AG04449 (cell line): ENCODE measurements at regions of chr19 and their contacts with region 1.

Region 1: DNA sequence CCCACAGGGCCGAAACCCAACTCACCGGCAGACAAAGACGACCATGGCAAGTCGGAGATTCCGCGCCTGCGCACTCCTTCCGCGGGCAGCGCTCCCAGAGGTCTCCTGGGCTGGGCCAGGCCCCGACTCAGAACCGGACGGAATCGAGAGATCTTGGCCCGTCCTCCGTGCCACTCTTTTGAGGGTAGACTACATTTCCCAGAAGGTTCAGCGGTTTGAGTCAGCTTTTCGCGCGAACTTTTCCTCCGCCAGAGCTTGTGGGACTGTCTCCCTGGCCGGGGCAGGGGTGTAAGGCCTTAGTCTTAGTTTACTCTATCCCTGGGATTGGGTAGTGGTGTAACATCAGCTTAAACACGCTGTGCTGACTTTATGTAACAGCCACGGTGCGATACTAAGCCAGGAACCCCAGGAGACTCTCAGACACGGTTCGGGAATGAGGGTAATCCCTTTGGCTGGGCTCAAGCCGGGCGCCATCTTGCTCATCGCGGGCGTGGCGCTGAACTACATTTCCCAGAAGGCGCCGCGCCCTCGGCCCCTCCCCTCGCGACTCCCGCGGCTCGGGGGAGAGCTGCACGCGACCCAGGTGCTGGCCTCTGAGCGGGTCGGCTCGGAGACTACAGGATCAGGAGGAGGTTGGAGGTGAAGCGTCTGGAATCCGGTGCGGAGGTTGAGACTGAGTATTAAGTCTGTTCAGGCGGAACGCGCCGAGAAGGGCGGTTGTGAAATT is at the start of gene ZNF260:
- DNase-seq: peak; percentile 82
- H3K4me3 ChIP-seq: peak within 1 kb of the TSS; percentile 95
- CTCF ChIP-seq: no peak

Region 2: GRCh38 chr19:36489118-36489919 is 39.0 kb before region 1 on chr19 and contains the start of gene ZNF566:
- CTCF ChIA-PET with region 1: no interaction called
- POLR2A ChIA-PET with region 1: interaction called, 13 read pairs
- DNase-seq: peak; percentile 87
- H3K4me3 ChIP-seq: peak within 1 kb of the TSS; percentile 99
- CTCF ChIP-seq: no peak

Region 3: DNA sequence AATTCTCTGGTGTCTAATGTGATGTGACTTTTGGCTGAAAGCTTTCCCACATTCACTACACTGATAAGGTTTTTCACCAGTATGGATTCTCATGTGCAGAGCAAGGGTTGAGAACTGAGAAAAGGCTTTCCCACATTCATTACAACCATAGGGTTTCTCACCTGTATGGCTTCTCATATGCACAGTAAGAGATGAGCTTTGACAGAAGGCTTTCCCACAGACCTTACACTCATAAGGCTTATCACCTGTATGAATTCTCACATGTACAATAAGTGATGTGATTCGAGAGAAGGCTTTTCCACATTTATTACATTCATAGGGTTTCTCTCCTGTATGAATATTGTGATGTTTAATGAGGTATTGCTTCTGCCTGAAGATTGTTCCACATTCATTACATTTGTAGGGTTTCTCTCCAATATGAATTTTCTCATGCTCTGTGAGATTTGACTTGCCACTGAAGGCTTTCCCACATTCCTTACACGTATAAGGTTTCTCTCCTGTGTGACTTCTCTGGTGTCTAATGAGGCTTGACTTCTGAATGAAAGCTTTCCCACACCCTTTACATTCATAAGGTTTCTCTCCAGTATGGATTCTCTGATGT is 14.2 kb before region 1 on chr19:
- CTCF ChIA-PET with region 1: no interaction called
- POLR2A ChIA-PET with region 1: no interaction called
- DNase-seq: no peak
- H3K4me3 ChIP-seq: no peak overlapping the region
- CTCF ChIP-seq: no peak